Activated CD4-positive, alpha-beta memory T cell treated with anti-CD3 and anti-CD28 coated beads for 36 hours (primary cell): ENCODE measurements at regions of chr4 and their contacts with region 1.

Region 1: GRCh38 chr4:102826890-102827673 is at the start of gene UBE2D3:
- DNase-seq: peak; percentile 97
- H3K4me3 Mint-ChIP-seq: no peak within 1 kb of the TSS
- H3K27ac Mint-ChIP-seq: no peak within 1 kb of the TSS
- H3K4me1 Mint-ChIP-seq: peaks cover 26% of the 10 kb centered on the region
- H3K27me3 Mint-ChIP-seq: no peaks in the 10 kb centered on the region
- total RNA-seq, gene UBE2D3: 415 to 447 TPM

Region 2: DNA sequence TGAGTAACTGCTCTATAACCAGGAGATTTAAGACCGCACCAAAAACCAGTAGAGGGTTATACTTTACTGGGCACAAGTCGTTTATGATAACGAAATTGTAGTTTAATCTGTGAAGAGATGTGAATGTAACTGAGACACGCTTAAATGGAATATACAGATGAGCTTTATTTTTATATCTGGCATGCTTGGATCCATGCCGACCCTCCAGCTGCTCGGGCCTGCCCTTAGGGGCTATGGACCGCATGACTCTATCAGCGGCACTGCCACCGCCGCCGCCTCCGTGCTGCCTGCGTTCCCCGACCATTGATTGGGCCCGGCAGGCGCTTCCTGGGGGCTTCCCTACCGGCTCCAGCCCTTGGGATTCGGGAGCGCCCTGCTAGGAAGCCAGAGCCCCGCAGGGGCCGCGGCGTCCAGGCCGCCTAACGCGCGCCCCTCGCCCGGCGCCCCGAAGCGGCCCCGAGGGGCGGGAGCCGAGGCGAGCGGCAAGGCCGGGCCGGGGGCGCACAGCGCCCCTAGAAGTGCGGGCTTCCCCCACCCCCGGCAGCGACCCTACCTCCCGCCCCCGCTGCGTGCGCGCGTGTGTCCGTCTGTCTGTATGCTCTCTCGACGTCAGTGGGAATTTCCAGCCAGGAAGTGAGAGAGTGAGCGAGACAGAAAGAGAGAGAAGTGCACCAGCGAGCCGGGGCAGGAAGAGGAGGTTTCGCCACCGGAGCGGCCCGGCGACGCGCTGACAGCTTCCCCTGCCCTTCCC is 326.2 kb before region 1 on chr4 and contains the start of gene NFKB1:
- CTCF ChIA-PET with region 1: interaction called, 5 read pairs
- POLR2A ChIA-PET with region 1: interaction called, 12 read pairs
- intact Hi-C with region 1: loop called (anchors 1 kb)
- DNase-seq: peak; percentile 87
- H3K4me3 Mint-ChIP-seq: peak within 1 kb of the TSS; percentile 94
- H3K27ac Mint-ChIP-seq: peak within 1 kb of the TSS; percentile 95
- H3K4me1 Mint-ChIP-seq: peaks cover 22% of the 10 kb centered on the region
- H3K27me3 Mint-ChIP-seq: no peaks in the 10 kb centered on the region
- total RNA-seq, gene NFKB1: 122 to 133 TPM

Region 3: DNA sequence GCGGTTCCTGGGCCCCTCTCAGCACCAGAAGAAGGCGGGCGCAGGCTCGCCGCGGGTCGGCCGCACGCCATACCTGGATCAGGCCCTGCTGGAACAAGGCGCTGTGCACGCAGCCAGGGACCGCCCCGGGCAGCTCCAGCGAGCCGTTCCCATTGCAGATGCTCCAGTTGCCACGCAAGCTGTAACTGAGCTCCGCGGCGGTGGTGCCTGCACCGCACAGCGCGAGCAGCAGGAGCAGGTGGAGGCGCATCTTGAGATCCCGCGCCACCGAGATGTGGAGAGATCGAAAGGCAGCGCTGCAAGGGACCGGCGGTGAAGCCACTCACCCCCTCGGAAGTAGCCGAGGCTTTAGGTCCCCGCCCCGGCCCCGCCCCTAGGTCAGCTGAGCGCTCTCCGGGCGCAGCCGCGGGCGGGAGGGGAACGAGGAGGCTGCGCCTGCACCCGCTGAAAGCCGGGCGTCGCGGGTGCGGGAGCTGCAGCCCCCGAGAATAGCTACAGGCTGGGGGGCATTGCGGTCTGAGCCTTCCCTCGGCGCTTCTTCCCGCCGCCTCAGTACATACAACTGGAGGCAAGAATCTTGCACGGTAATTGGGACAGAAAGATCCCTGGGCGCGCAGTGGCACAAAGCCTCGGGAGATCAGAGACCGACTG is 66.3 kb before region 1 on chr4 and contains the start of gene MANBA:
- CTCF ChIA-PET with region 1: no interaction called
- POLR2A ChIA-PET with region 1: interaction called, 25 read pairs
- intact Hi-C with region 1: loop called (anchors 1 kb)
- DNase-seq: peak; percentile 91
- H3K4me3 Mint-ChIP-seq: peak within 1 kb of the TSS; percentile 97
- H3K27ac Mint-ChIP-seq: peak within 1 kb of the TSS; percentile 82
- H3K4me1 Mint-ChIP-seq: peaks cover 36% of the 10 kb centered on the region
- H3K27me3 Mint-ChIP-seq: no peaks in the 10 kb centered on the region
- total RNA-seq, gene MANBA: 10.2 to 10.7 TPM

Region 4: GRCh38 chr4:102868781-102869568 is 41.9 kb after region 1 on chr4 and contains the start of gene CISD2:
- CTCF ChIA-PET with region 1: interaction called, 15 read pairs
- POLR2A ChIA-PET with region 1: interaction called, 147 read pairs
- intact Hi-C with region 1: loop called (anchors 1 kb)
- DNase-seq: peak; percentile 95
- H3K4me3 Mint-ChIP-seq: peak within 1 kb of the TSS; percentile 98
- H3K27ac Mint-ChIP-seq: peak within 1 kb of the TSS; percentile 98
- H3K4me1 Mint-ChIP-seq: peaks cover 54% of the 10 kb centered on the region
- H3K27me3 Mint-ChIP-seq: no peaks in the 10 kb centered on the region
- total RNA-seq, gene CISD2: 28.5 to 32.8 TPM

Region 5: DNA sequence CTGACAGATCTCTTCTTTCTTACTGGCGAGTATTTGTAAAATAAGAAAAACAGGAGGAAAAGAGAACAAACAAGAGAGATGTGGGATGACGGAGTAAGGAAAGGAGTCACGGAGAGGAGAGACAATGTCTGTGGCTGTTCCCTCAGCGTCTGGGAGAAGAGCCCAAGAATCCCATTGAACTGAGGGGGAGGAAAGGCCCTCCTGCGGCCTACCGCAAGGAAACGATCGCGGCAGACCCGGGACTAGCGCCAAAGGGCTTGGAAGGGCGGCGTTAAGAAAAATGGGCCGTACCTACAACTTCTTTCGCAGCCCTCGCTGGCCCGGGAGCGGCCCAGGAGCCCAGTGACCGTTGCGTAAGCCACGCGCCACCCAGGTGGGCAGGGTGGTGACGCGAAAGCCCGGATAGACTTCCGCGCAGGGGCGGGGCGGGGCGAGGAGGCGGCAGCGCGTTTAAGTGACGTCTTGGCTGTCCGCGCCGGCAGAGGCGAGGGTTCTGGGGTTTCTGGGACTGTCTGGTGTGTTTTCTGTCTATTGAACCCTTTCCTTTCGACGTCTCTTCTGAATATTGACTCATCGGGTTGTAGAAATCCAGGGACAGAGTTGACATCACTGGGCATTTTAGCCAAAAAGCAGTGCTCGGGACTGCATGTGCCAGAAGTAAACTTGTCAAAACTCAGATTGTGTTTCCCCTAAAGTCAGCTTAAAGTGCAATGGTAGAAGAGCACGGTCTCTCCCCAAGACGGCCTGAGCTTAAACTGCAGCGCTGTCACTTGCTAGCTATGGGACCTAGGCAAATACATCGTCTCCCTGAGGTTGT is 192.4 kb after region 1 on chr4 and contains the start of gene SLC9B1:
- CTCF ChIA-PET with region 1: no interaction called
- POLR2A ChIA-PET with region 1: no interaction called
- intact Hi-C with region 1: loop called (anchors 1 kb)
- DNase-seq: peak; percentile 97
- H3K4me3 Mint-ChIP-seq: peak within 1 kb of the TSS; percentile 84
- H3K27ac Mint-ChIP-seq: peak within 1 kb of the TSS; percentile 92
- H3K4me1 Mint-ChIP-seq: peaks cover 15% of the 10 kb centered on the region
- H3K27me3 Mint-ChIP-seq: no peaks in the 10 kb centered on the region
- total RNA-seq, gene SLC9B1: 1.9 to 2.4 TPM

Region 6: DNA sequence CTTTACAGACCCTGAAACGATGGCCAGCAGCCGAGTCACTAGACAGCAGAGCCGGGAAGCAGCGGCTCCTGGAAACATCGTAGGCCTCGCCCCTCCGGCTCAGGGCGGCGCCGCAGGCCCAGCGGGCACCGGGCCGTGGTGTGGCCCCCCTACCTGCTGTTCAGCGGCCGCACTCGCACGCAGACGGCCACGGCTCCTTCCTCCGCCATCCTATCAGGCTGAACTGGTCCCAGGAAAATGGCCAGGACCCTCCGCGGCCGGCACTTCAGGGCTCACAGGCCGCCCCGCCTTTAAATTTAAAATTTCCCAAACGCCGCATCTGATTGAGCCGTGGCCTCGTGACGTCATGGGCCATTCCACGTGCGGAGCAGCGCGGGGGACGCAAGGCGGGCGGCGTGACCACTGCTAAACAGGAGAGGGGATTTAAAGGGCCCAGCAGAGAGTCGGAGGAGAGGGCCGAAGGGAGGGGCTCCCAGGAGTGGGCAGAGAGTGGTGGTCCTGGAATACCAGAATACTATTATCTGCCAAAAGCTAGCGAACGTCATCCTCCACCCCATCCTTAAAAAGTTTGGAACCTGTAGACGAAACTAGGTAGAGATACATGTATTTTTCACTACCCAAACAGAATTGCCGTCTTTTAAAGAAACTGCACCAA is 371.2 kb after region 1 on chr4 and contains the start of gene CENPE:
- CTCF ChIA-PET with region 1: no interaction called
- POLR2A ChIA-PET with region 1: no interaction called
- intact Hi-C with region 1: loop called (anchors 5 kb)
- DNase-seq: peak; percentile 89
- H3K4me3 Mint-ChIP-seq: peak within 1 kb of the TSS; percentile 85
- H3K27ac Mint-ChIP-seq: peak within 1 kb of the TSS; percentile 86
- H3K4me1 Mint-ChIP-seq: peaks cover 12% of the 10 kb centered on the region
- H3K27me3 Mint-ChIP-seq: peaks cover 5% of the 10 kb centered on the region
- total RNA-seq, gene CENPE: 41.9 to 49.1 TPM